Right cardiac atrium (tissue), 5 donors: ENCODE measurements at regions of chr19 and their contacts with region 1.

Region 1: GRCh38 chr19:14419106-14419813 is at the start of gene DDX39A:
- DNase-seq: peak; percentile 98 to 99 (median 98)
- ATAC-seq: peak; percentile 98
- H3K4me3 ChIP-seq: peak within 1 kb of the TSS; percentile 95
- H3K27ac ChIP-seq: peak within 1 kb of the TSS; percentile 81
- H3K4me1 ChIP-seq: peaks cover 2% of the 10 kb centered on the region
- H3K27me3 ChIP-seq: no peaks in the 10 kb centered on the region
- total RNA-seq, gene DDX39A: 20.7 to 34.7 (median 30.2) TPM

Region 2: GRCh38 chr19:14354445-14354844 is 64.8 kb before region 1 on chr19:
- intact Hi-C with region 1: loop called in 1 of 4 experiments (anchors 10 kb)
- DNase-seq: peak in 1 of 3 donors; percentile 3
- ATAC-seq: no peak
- H3K4me3 ChIP-seq: no peak overlapping the region
- H3K27ac ChIP-seq: no peak overlapping the region
- H3K4me1 ChIP-seq: no peaks in the 10 kb centered on the region
- H3K27me3 ChIP-seq: no peaks in the 10 kb centered on the region

Region 3: DNA sequence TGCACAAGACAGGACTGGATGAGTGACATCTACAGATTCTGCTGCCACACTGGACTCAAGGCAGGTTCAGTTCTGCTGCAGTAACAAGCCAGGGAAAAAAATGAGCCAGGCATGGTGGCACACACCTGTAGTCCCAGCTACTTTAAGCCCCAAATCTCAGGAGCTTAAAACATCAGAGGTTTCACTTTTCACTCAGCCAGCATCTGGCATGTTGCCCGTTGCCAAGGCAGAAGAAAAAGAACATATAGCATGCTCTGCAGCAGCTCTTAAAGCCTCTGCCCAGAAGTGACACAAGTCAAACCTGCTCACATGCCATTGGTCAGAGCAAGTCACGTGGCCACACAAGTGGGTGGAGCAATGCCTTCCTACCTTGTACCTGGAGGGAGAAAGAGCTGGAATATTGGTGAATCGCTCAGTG is 52.8 kb before region 1 on chr19:
- intact Hi-C with region 1: loop called in 1 of 4 experiments (anchors 10 kb)
- DNase-seq: peak; percentile 50 to 86 (median 81)
- ATAC-seq: peak in 1 of 2 donors; percentile 40
- H3K4me3 ChIP-seq: no peak overlapping the region
- H3K27ac ChIP-seq: no peak overlapping the region
- H3K4me1 ChIP-seq: peaks cover 2% of the 10 kb centered on the region
- H3K27me3 ChIP-seq: no peaks in the 10 kb centered on the region